ENCODE measurements at regions of chr1 and their contacts with region 1.

Region 1: DNA sequence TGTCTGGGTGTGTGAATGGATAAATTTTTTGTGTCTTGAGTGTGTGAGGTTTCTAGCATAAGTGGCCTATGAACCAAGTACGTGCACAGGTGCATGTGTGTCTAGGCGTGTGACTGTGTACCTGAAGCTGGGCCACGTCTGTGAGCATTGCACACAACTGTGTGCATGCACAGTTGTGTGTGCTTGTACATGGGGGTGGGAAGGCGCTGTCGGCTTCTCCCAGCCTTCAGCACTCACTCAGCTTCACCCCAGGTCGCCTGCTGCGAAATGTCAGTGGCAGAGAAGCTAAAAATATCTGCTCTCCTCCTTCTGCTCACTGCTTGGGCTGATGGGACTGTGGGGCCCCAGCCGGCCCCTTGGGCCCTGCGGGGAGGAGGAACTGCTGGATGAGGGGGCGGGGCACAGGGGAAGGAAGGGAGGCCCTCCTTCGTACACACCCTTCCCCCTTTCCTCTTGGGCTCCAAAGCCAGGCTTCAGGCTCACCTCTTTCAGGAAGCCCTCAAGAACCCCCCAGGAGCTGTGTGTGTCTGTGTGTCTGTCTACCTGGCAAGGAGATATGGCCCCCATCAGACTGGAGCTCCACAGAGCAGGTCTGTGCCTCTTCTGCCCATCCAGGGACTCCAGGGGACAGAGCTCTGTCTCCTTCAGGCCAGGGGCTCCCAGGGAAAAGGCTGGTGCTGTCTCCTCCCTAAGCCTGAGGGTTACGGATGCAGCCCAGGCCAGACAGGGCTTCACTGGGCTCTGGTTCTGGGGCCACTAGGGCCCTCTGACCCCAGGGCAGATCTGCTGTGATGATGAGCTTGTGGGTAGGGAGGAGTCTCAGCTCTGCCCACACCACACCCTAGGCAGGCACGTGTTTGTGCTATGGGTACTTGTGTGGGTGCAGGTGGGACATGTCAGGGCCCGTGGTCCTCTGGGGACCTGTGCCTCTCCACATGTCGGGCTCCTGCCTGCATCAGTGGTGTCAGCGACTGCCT is 35.6 kb upstream of the WASF2 start:
- DNase-seq: peak; percentile 87
- ATAC-seq: peak; percentile 53
- H3K4me3 Mint-ChIP-seq: peak overlapping the region; percentile 63
- H3K27ac Mint-ChIP-seq: peak overlapping the region; percentile 81
- H3K4me1 Mint-ChIP-seq: peaks cover 60% of the 10 kb centered on the region
- H3K27me3 Mint-ChIP-seq: no peaks in the 10 kb centered on the region

Region 2: GRCh38 chr1:27306892-27307761 is 218.5 kb before region 1 on chr1:
- CTCF ChIA-PET with region 1: no interaction called
- POLR2A ChIA-PET with region 1: no interaction called
- intact Hi-C with region 1: no loop called
- DNase-seq: no peak
- ATAC-seq: no peak
- H3K4me3 Mint-ChIP-seq: no peak overlapping the region
- H3K27ac Mint-ChIP-seq: no peak overlapping the region
- H3K4me1 Mint-ChIP-seq: no peaks in the 10 kb centered on the region
- H3K27me3 Mint-ChIP-seq: no peaks in the 10 kb centered on the region

Region 3: GRCh38 chr1:27416387-27417111 is 109.0 kb before region 1 on chr1:
- CTCF ChIA-PET with region 1: interaction called, 5 read pairs
- POLR2A ChIA-PET with region 1: interaction called, 3 read pairs
- intact Hi-C with region 1: loop called (anchors 2 kb)
- DNase-seq: peak; percentile 69
- ATAC-seq: peak; percentile 64
- H3K4me3 Mint-ChIP-seq: no peak overlapping the region
- H3K27ac Mint-ChIP-seq: peak overlapping the region; percentile 40
- H3K4me1 Mint-ChIP-seq: peaks cover 40% of the 10 kb centered on the region
- H3K27me3 Mint-ChIP-seq: no peaks in the 10 kb centered on the region

Region 4: GRCh38 chr1:27481994-27482620 is 43.5 kb before region 1 on chr1:
- CTCF ChIA-PET with region 1: interaction called, 4 read pairs
- POLR2A ChIA-PET with region 1: no interaction called
- intact Hi-C with region 1: loop called in 1 of 2 experiments (anchors 5 kb)
- DNase-seq: no peak
- ATAC-seq: peak; percentile 87
- H3K4me3 Mint-ChIP-seq: no peak overlapping the region
- H3K27ac Mint-ChIP-seq: peak overlapping the region; percentile 83
- H3K4me1 Mint-ChIP-seq: peaks cover 58% of the 10 kb centered on the region
- H3K27me3 Mint-ChIP-seq: no peaks in the 10 kb centered on the region

Region 5: DNA sequence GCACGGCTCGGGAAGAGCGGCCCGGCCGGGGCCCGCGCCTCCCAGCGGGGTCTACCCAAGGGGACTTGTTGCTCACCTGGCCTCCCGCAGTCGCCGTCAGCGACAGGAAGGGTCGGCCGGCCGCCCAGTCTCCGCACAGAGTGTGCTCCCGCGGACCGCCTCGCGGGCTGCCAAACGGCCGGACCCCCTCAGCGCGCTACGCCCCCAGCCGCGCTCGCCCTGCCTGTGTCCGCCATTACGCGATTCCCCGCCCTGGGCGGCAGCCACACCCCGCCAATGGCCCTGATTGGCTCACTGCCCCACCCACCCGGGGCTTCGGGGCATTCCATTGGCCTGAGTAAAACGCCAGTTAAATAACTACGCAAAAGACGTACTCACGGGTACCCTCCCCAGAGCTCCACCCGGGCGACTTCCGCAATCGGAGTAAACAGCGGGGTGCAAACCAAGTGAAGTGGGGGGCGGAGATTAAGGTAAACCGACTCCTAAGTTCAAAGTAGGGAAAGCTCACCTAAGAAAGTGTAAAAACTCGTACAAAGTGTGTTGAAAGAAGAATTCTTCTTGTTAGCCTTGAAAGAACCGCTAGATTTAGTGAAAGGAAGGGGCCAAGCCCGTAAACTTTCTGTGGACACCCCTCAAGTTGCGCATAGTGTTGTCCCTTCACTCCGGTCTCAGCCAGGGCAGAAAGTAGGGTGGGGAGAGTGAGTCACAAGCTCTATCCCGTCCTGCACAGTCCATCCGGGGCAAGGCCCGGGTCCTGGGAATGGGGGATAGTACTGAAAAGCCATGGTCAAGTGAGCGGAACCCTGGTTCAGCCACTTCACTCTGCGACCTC is 35.5 kb before region 1 on chr1 and contains the start of gene WASF2:
- CTCF ChIA-PET with region 1: interaction called, 4 read pairs
- POLR2A ChIA-PET with region 1: interaction called, 6 read pairs
- intact Hi-C with region 1: loop called in 1 of 2 experiments (anchors 1 kb)
- DNase-seq: peak; percentile 98
- ATAC-seq: peak; percentile 96
- H3K4me3 Mint-ChIP-seq: peak within 1 kb of the TSS; percentile 98
- H3K27ac Mint-ChIP-seq: peak within 1 kb of the TSS; percentile 99
- H3K4me1 Mint-ChIP-seq: peaks cover 28% of the 10 kb centered on the region
- H3K27me3 Mint-ChIP-seq: no peaks in the 10 kb centered on the region
- total RNA-seq, gene WASF2: 104 to 132 TPM

Region 6: DNA sequence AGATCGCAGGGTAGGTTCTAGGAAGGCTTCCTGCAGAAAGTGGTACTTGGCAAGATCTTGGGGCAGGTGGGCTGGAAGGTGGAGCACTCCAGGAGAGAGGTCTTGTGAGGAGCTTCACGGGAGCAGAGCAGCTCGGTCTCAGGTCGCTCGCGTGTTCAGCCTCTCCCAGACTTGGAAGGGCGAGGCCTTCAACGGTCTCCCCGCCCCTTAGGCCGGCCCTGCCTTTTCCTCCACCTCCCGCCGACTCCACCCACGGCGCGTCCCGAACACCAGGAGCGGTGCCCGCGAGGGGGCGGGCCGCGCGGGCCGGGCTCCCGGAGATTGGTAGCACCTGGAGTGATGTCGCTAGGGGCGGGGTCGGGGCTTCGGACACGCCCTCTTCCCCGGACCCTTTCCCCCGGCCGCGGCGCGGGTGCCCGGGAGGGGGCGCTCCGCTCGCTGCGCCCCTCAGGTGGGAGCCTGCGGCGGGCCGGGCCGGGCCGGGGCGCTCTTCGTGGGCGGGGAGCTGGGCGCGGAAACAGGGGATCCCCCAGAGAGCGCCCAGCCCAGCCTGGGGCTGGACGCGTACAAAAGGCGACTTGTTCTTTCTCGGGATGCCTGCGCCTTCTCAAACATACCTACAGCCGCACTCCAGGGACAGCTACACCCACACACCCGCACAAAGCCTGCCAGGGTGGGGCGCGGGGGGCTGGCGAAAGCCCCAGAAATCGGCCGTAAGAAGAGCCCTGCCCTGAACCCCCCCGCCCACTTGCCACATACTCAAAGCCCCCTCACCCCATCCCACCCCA is 42.9 kb after region 1 on chr1:
- CTCF ChIA-PET with region 1: no interaction called
- POLR2A ChIA-PET with region 1: interaction called, 3 read pairs
- intact Hi-C with region 1: loop called in 1 of 2 experiments (anchors 1 kb)
- DNase-seq: peak; percentile 95
- ATAC-seq: peak; percentile 97
- H3K4me3 Mint-ChIP-seq: peak overlapping the region; percentile 39
- H3K27ac Mint-ChIP-seq: no peak overlapping the region
- H3K4me1 Mint-ChIP-seq: peaks cover 18% of the 10 kb centered on the region
- H3K27me3 Mint-ChIP-seq: no peaks in the 10 kb centered on the region